Activated T-helper 2 cell treated with anti-CD3 and anti-CD28 coated beads, Interferon-gamma antibody, Interleukin-2, Interleukin-4, amounts not matched to agents 10 μg/mL and 5 μg/mL and 100 μg/mL, durations not matched to agents 14 hours and 24 hours and 36 hours (primary cell): ENCODE measurements at regions of chr14 and their contacts with region 1.

Region 1: GRCh38 chr14:36520601-36521525 is 831 bp upstream of the NKX2-1 start:
- DNase-seq: no peak
- H3K4me3 Mint-ChIP-seq: no peak overlapping the region
- H3K27ac Mint-ChIP-seq: no peak overlapping the region
- H3K4me1 Mint-ChIP-seq: peaks cover 4% of the 10 kb centered on the region
- H3K27me3 Mint-ChIP-seq: peaks cover 71% of the 10 kb centered on the region

Region 2: DNA sequence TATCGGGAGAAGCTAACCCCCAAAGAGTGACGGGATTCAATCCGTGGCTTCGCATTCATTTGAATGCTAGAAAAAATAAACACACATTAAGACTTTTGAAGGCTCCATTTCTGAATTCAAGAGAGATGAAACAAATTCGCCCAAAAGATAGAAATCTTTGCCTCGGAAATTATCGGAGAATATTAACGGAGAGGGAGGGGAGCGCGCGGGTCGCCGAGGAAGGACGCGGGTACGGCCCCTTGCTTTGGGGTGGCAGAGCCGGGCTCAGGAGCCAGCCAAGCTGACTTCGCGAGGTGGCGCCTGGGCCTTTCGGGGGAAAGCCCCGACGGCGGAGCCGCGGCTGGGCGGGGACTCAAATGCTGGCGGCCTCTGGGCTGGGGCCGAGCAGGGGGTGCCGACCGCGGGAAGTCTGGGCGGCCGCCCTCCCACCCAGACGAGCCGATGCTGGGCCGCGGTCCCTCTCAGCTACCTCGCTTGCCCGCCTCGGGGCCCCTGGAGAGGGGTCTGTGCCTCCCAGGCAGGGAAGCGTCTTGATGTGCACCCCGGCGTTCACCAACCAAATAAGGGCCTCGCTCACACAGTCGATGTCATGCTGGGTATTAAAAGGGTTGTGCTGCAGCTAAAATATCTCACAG is 15.6 kb before region 1 on chr14:
- intact Hi-C with region 1: loop called (anchors 2 kb)
- DNase-seq: no peak
- H3K4me3 Mint-ChIP-seq: no peak overlapping the region
- H3K27ac Mint-ChIP-seq: no peak overlapping the region
- H3K4me1 Mint-ChIP-seq: peaks cover 6% of the 10 kb centered on the region
- H3K27me3 Mint-ChIP-seq: peaks cover 85% of the 10 kb centered on the region

Region 3: DNA sequence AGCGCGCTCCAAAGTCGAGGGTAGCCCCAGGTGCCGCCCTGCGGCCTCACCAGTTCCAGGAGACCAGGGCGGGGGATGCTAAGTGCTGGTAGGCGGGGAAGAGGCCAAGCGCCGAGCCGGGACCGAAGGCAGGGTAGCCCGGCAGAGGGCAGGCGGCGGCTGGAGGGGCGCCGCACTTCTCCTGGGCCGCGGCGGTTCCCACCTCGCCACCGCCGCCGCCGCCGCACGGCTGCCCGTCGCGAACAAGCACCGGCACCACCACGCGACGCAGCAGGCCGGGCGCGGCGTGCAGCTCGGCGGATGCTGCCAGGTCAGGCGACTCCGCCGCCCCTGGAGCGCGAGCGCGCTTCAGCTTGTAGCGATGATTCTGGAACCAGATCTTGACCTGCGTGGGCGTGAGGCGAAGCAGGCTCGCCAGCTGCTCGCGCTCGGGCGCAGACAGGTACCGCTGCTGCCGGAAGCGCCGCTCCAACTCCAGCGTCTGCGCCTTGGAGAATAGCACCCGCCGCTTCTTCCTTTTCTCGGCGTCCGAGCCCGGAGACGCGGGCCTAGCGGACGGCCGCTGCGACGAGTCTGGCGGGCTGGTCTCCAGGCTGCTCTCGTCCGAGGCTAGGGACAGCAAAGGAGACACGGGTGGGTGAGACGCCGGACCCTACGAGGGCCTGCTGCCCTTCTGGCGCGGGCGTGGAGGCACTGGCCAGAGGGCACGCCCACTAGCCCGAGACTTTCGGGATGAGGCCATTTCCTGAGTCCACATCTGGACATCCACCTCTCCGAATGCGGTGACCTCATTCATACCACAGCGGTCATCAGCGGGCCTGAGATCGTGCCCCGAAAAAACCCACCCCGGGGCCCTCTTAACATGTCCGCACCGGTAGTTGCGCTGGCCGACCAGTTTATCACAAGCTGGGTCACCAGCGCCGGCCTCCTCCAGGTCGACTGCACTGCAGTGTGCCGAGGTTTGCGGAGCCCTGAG is 60.3 kb after region 1 on chr14:
- intact Hi-C with region 1: loop called (anchors 2 kb)
- DNase-seq: no peak
- H3K4me3 Mint-ChIP-seq: no peak overlapping the region
- H3K27ac Mint-ChIP-seq: no peak overlapping the region
- H3K4me1 Mint-ChIP-seq: no peaks in the 10 kb centered on the region
- H3K27me3 Mint-ChIP-seq: peaks cover 61% of the 10 kb centered on the region

Region 4: GRCh38 chr14:36655963-36656686 is 135.3 kb after region 1 on chr14:
- intact Hi-C with region 1: loop called (anchors 2 kb)
- DNase-seq: no peak
- H3K4me3 Mint-ChIP-seq: no peak overlapping the region
- H3K27ac Mint-ChIP-seq: no peak overlapping the region
- H3K4me1 Mint-ChIP-seq: peaks cover 4% of the 10 kb centered on the region
- H3K27me3 Mint-ChIP-seq: peaks cover 91% of the 10 kb centered on the region

Region 5: GRCh38 chr14:37594238-37594914 is 1073.5 kb after region 1 on chr14:
- intact Hi-C with region 1: loop called (anchors 5 kb)
- DNase-seq: no peak
- H3K4me3 Mint-ChIP-seq: peak overlapping the region; percentile 65
- H3K27ac Mint-ChIP-seq: peak overlapping the region; percentile 55
- H3K4me1 Mint-ChIP-seq: peaks cover 7% of the 10 kb centered on the region
- H3K27me3 Mint-ChIP-seq: peaks cover 74% of the 10 kb centered on the region

Region 6: GRCh38 chr14:38208618-38209562 is 1688.0 kb after region 1 on chr14:
- intact Hi-C with region 1: loop called (anchors 10 kb)
- DNase-seq: no peak
- H3K4me3 Mint-ChIP-seq: no peak overlapping the region
- H3K27ac Mint-ChIP-seq: no peak overlapping the region
- H3K4me1 Mint-ChIP-seq: peaks cover 2% of the 10 kb centered on the region
- H3K27me3 Mint-ChIP-seq: peaks cover 67% of the 10 kb centered on the region